ENCODE measurements at regions of chr21 and their contacts with region 1.

Region 1: GRCh38 chr21:45120975-45121374 is 46.6 kb downstream of the ADARB1 start:
- DNase-seq: no peak
- ATAC-seq: no peak
- H3K4me3 ChIP-seq: no peak overlapping the region
- H3K4me3 Mint-ChIP-seq: no peak overlapping the region
- H3K27ac ChIP-seq: no peak overlapping the region
- H3K27ac Mint-ChIP-seq: no peak overlapping the region
- H3K4me1 ChIP-seq: peaks cover 72 to 78% of the 10 kb centered on the region in 2 donors
- H3K4me1 Mint-ChIP-seq: peaks cover 86% of the 10 kb centered on the region
- H3K27me3 ChIP-seq: no peaks in the 10 kb centered on the region
- H3K27me3 Mint-ChIP-seq: no peaks in the 10 kb centered on the region
- CTCF ChIP-seq: no peak

Region 2: GRCh38 chr21:45098867-45099266 is 22.1 kb before region 1 on chr21:
- CTCF ChIA-PET with region 1: interaction called, 235 read pairs
- POLR2A ChIA-PET with region 1: no interaction called
- intact Hi-C with region 1: no loop called
- DNase-seq: peak; percentile 42
- ATAC-seq: no peak
- H3K4me3 ChIP-seq: no peak overlapping the region
- H3K4me3 Mint-ChIP-seq: peak overlapping the region; percentile 16
- H3K27ac ChIP-seq: peak overlapping the region in 1 of 2 donors; percentile 6
- H3K27ac Mint-ChIP-seq: peak overlapping the region; percentile 60
- H3K4me1 ChIP-seq: peaks cover 74 to 81% of the 10 kb centered on the region in 2 donors
- H3K4me1 Mint-ChIP-seq: peaks cover 77% of the 10 kb centered on the region
- H3K27me3 ChIP-seq: no peaks in the 10 kb centered on the region
- H3K27me3 Mint-ChIP-seq: no peaks in the 10 kb centered on the region
- CTCF ChIP-seq: peak; percentile 32